ENCODE measurements at regions of chr1 and their contacts with region 1.

Region 1: GRCh38 chr1:61950418-61950817 is 208.1 kb downstream of the PATJ start:
- DNase-seq: no peak
- H3K4me3 ChIP-seq: no peak overlapping the region
- H3K27ac ChIP-seq: peak overlapping the region; percentile 87
- H3K4me1 ChIP-seq: peaks cover 15% of the 10 kb centered on the region
- H3K27me3 ChIP-seq: no peaks in the 10 kb centered on the region
- CTCF ChIP-seq: peak; percentile 43

Region 2: DNA sequence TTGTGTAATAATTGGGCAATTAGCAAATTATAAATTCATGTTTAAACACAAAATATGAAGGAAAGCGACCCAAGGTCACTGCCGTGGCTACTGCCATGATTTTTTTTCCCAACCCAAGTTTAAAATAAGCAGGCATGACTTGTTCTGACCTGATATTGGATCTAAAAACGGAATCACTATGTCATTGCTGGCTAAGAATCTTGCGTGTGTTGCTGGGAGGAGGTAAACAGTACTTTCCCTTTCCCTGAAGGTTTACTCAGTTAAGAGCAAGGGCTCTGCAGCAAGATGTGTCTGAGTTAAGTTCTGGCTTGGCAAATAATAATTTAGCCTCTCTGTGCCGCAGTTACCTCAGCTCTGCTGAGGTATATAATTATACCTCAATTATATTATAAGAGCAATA is 118.6 kb after region 1 on chr1:
- intact Hi-C with region 1: loop called (anchors 10 kb)
- DNase-seq: no peak
- H3K4me3 ChIP-seq: peak overlapping the region; percentile 11
- H3K27ac ChIP-seq: peak overlapping the region; percentile 93
- H3K4me1 ChIP-seq: peaks cover 63% of the 10 kb centered on the region
- H3K27me3 ChIP-seq: no peaks in the 10 kb centered on the region
- CTCF ChIP-seq: no peak

Measured in left ventricle myocardium inferior (tissue), 1 donor.